Lower lobe of right lung (tissue), 2 donors: ENCODE measurements at regions of chr9 and their contacts with region 1.

Region 1: GRCh38 chr9:72268961-72269360 is 96.0 kb downstream of the ZFAND5 start:
- DNase-seq: no peak
- ATAC-seq: no peak
- H3K4me3 ChIP-seq: no peak overlapping the region
- H3K27ac ChIP-seq: no peak overlapping the region
- H3K4me1 ChIP-seq: no peaks in the 10 kb centered on the region
- H3K27me3 ChIP-seq: no peaks in the 10 kb centered on the region
- CTCF ChIP-seq: no peak

Region 2: GRCh38 chr9:72038890-72039410 is 230.0 kb before region 1 on chr9:
- intact Hi-C with region 1: loop called (anchors 5 kb)
- DNase-seq: peak; percentile 63
- ATAC-seq: peak; percentile 90 to 91
- H3K4me3 ChIP-seq: no peak overlapping the region
- H3K27ac ChIP-seq: no peak overlapping the region
- H3K4me1 ChIP-seq: peaks cover 10% of the 10 kb centered on the region
- H3K27me3 ChIP-seq: no peaks in the 10 kb centered on the region
- CTCF ChIP-seq: peak; percentile 99

Region 3: DNA sequence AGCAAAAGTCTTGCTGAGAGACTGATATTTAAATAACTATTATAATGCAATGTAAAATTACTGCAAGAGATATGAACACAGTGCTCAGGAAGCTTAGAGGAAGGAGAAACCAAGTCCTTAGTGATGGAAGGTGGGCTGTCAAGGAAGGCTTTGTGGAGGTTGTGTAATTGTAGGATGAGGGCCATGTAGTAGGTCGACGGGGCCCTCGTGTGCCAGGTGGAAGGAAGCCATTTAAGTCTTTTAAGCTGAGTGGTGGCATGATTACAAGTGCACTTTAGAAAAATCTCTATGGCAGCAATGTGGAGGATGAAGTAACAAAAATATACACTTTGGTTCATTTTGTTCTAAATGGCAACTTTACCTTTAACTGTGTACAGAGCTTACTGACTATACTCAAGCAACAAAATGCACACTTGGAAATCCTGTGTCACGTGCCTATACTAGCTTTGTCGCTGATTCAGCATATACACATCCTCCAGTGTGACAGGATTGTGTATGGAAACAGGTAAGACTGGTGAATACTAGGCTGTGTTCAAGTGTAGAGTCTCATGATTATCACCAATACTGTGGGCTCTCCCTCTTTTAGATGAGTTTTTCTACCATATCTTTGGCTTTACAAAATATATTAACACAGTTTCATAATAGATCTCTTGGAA is 331.0 kb after region 1 on chr9:
- intact Hi-C with region 1: no loop called
- DNase-seq: no peak
- ATAC-seq: peak; percentile 67 to 74
- H3K4me3 ChIP-seq: no peak overlapping the region
- H3K27ac ChIP-seq: no peak overlapping the region
- H3K4me1 ChIP-seq: no peaks in the 10 kb centered on the region
- H3K27me3 ChIP-seq: no peaks in the 10 kb centered on the region
- CTCF ChIP-seq: no peak